SK-N-SH (cell line): ENCODE measurements at regions of chr11 and their contacts with region 1.

Region 1: DNA sequence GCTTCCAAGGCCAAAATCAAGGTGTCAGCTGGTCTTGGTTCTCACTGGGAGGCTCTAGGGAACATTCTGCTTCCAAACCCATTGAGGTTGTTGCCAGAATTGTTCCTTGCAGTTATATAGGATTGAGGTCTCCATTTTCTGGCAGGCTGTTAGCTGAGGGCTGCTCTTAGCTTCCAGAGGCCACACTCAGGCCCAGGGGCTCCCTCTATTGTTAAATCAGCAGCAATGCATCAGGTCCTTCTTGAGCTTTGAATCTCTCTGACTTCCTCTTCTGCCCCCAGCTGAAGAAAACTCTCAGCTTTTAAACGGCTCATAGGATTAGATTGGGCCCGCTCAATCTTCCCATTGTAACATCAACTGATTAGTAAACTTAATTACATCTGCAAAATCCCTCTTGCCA is 39.3 kb upstream of the BSX start:
- DNase-seq: peak; percentile 76
- H3K4me3 ChIP-seq: no peak overlapping the region
- H3K27ac ChIP-seq: no peak overlapping the region
- H3K4me1 ChIP-seq: no peaks in the 10 kb centered on the region
- H3K27me3 ChIP-seq: 0 out of 2 replicates have a peak, but pooled peaks cover 4% of the 10 kb centered on the region
- CTCF ChIP-seq: peak; percentile 63
- EP300 ChIP-seq: no peak
- RAD21 ChIP-seq: peak; percentile 78

Region 2: DNA sequence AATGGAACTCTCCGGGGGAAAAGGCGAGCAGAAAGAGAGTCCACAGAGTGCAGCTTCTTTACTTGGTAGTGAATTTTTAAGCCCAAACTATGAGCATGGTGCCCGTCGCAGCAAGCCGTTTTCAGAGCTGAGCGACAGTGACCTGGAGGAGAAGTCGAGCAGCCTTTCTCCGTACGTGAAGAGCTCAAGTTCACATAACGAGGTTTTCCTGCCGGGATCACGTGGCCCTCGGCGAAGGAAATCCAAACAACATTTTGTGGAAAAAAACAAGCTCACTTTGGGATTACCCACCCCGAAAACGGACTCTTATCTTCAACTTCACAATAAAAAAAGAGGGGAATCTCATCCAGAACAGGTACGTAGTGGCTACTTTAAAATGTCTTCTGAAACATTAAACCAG is 116.9 kb before region 1 on chr11:
- CTCF ChIA-PET with region 1: interaction called, 13 read pairs
- POLR2A ChIA-PET with region 1: no interaction called
- DNase-seq: no peak
- H3K4me3 ChIP-seq: no peak overlapping the region
- H3K27ac ChIP-seq: no peak overlapping the region
- H3K4me1 ChIP-seq: no peaks in the 10 kb centered on the region
- H3K27me3 ChIP-seq: no peaks in the 10 kb centered on the region
- CTCF ChIP-seq: no peak
- EP300 ChIP-seq: no peak
- RAD21 ChIP-seq: no peak

Region 3: GRCh38 chr11:122920579-122920978 is 100.4 kb before region 1 on chr11:
- CTCF ChIA-PET with region 1: interaction called, 46 read pairs
- POLR2A ChIA-PET with region 1: no interaction called
- DNase-seq: no peak
- H3K4me3 ChIP-seq: no peak overlapping the region
- H3K27ac ChIP-seq: no peak overlapping the region
- H3K4me1 ChIP-seq: peaks cover 0 to 3% of the 10 kb centered on the region in 2 experiments; a peak in 1 of 4 replicates
- H3K27me3 ChIP-seq: no peaks in the 10 kb centered on the region
- CTCF ChIP-seq: no peak
- EP300 ChIP-seq: no peak
- RAD21 ChIP-seq: no peak

Region 4: GRCh38 chr11:123039605-123040432 is 18.9 kb after region 1 on chr11:
- CTCF ChIA-PET with region 1: interaction called, 17 read pairs
- POLR2A ChIA-PET with region 1: no interaction called
- DNase-seq: peak; percentile 78
- H3K4me3 ChIP-seq: 0 out of 4 replicates have a peak overlapping the region, but pooled peaks of 1 of the 2 experiments have one; percentile 3
- H3K27ac ChIP-seq: peak overlapping the region; percentile 23 to 72; a peak in 3 of 4 replicates
- H3K4me1 ChIP-seq: peaks cover 9% of the 10 kb centered on the region in 2 experiments; a peak in 2 of 4 replicates
- H3K27me3 ChIP-seq: no peaks in the 10 kb centered on the region
- CTCF ChIP-seq: no peak
- EP300 ChIP-seq: 0 out of 4 replicates have a peak, but pooled peaks of 1 of the 2 experiments have one; percentile 49
- RAD21 ChIP-seq: no peak

Region 5: DNA sequence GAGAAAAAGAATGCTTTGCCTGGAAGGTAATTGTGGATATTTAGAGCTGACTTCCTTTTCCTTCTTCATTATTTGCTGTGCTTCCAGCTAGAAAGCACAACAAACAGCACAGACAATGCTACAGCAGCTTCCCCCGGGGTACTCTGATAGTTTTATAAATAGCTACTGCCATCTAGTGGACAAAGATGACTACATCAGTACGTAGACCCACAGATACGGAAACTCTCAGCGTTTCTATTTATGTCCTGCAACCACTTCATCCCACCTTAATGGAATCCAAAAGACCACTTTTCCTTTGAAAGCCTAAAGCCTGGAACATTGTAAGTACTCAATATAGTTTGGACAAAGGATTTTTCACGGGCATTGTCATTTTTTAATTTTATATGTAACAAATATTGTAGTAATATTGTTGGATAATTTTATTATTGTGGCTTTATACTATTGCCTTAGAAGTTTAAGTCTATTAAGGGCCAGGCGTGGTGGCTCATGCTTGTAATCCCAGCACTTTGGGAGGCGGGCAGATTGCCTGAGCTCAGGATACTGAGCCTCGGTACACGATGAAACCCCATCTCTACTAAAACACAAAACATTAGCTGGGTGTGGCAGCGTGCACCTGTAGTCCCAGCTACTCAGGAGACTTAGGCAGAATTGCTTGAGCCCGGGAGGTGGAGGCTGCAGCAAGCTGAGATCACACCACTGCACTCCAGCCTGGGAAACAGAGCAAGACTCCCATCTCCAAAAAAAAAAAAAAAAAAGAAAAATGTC is 33.5 kb after region 1 on chr11:
- CTCF ChIA-PET with region 1: interaction called, 74 read pairs
- POLR2A ChIA-PET with region 1: interaction called, 4 read pairs
- DNase-seq: peak; percentile 75
- H3K4me3 ChIP-seq: no peak overlapping the region; a peak in 1 of 4 replicates
- H3K27ac ChIP-seq: peak overlapping the region in 1 of 2 experiments; percentile 99; a peak in 2 of 4 replicates
- H3K4me1 ChIP-seq: peaks cover 9 to 24% of the 10 kb centered on the region in 2 experiments; a peak in 3 of 4 replicates
- H3K27me3 ChIP-seq: no peaks in the 10 kb centered on the region
- CTCF ChIP-seq: peak; percentile 80
- EP300 ChIP-seq: no peak
- RAD21 ChIP-seq: peak; percentile 82